Transverse colon (tissue), 4 donors: ENCODE measurements at regions of chr11 and their contacts with region 1.

Region 1: GRCh38 chr11:93529707-93530467 is 13.3 kb downstream of the SMCO4 start:
- DNase-seq: no peak
- H3K4me3 ChIP-seq: no peak overlapping the region
- H3K27ac ChIP-seq: peak overlapping the region; percentile 40 to 69 (median 57)
- H3K4me1 ChIP-seq: peaks cover 4 to 53% (median 12%) of the 10 kb centered on the region in 4 donors
- H3K27me3 ChIP-seq: no peaks in the 10 kb centered on the region
- CTCF ChIP-seq: no peak
- EP300 ChIP-seq: no peak
- POLR2A ChIP-seq: no peak

Region 2: DNA sequence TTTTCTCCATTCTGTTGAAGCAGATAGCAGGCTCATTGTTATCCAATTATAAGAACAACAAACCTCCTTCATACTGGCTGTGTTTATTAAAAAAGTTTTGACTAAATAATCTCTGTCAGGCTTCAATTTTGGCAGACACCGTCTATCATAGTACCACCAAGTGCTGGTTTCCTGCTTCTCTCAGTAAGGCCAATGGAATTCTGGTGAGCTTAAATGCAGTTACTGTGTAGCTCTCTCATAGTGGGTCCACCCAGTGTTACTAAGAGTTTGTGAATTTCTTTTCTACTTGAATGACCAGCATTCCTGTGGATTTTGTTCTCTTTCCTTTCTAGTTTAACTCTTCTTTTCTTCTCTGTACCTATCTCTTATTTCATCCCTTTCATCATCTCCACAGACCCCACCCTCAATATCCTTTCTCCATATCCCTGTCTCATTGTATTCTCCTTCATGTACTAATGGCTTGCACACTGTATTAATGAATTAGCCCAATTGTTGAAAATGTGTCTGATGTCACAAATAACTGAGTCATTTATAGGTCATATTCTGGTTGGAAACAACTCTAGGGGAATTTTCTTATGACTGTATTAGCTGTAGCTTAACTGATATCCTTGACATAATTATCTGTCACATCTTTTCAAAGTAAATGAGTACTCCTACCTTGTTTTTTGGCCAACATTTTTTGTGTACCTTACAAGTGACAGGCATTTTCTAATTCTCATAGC is 933.1 kb before region 1 on chr11:
- in situ Hi-C with region 1: no loop called
- intact Hi-C with region 1: no loop called
- DNase-seq: no peak
- H3K4me3 ChIP-seq: no peak overlapping the region
- H3K27ac ChIP-seq: no peak overlapping the region
- H3K4me1 ChIP-seq: no peaks in the 10 kb centered on the region
- H3K27me3 ChIP-seq: no peaks in the 10 kb centered on the region
- CTCF ChIP-seq: no peak
- EP300 ChIP-seq: no peak
- POLR2A ChIP-seq: no peak

Region 3: DNA sequence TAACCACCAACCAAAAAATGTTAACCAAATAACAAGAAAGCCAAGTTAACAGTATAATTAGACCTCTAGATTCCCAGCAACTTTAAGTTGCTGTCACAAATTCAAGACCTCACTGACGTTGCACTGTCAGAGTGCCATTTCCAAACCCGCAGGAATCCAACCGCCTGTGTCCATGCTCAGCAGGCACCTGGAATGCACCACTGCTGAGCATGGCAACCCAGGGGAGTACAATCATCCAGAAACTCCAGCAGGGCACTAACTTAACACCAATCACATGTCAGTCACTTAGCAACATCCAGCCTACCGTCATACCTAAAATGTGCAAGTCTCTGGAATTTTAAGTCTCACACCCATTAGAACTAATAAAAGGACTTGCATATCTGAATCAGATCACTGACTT is 35.5 kb before region 1 on chr11:
- in situ Hi-C with region 1: no loop called
- intact Hi-C with region 1: no loop called
- DNase-seq: no peak
- H3K4me3 ChIP-seq: no peak overlapping the region
- H3K27ac ChIP-seq: no peak overlapping the region
- H3K4me1 ChIP-seq: peaks cover 0 to 18% (median 10%) of the 10 kb centered on the region in 4 donors
- H3K27me3 ChIP-seq: no peaks in the 10 kb centered on the region
- CTCF ChIP-seq: no peak
- EP300 ChIP-seq: no peak
- POLR2A ChIP-seq: no peak

Region 4: GRCh38 chr11:93861808-93862207 is 331.9 kb after region 1 on chr11:
- in situ Hi-C with region 1: no loop called
- intact Hi-C with region 1: no loop called
- DNase-seq: no peak
- H3K4me3 ChIP-seq: no peak overlapping the region
- H3K27ac ChIP-seq: no peak overlapping the region
- H3K4me1 ChIP-seq: no peaks in the 10 kb centered on the region
- H3K27me3 ChIP-seq: no peaks in the 10 kb centered on the region
- CTCF ChIP-seq: no peak
- EP300 ChIP-seq: no peak
- POLR2A ChIP-seq: no peak

Region 5: DNA sequence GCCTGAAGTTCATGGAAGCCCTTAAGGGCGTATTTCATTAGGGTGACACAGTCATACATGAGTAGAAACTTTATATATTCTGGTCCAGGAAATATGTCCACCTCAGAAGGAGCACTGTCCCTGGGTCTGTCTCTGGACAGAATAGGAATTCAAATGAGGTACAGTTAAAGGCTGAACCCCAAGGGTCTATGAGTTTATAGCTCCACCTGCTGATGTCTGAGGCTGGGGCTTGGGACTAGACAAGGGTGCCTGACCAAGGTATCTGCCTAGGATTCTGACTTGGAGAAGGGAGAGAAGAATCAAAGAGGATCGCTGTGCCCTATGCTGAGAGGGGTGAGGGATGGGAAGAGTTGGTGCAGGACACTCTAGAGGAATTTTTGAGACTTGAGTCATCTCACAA is 506.2 kb after region 1 on chr11:
- in situ Hi-C with region 1: no loop called
- intact Hi-C with region 1: no loop called
- DNase-seq: no peak
- H3K4me3 ChIP-seq: no peak overlapping the region
- H3K27ac ChIP-seq: no peak overlapping the region
- H3K4me1 ChIP-seq: no peaks in the 10 kb centered on the region
- H3K27me3 ChIP-seq: no peaks in the 10 kb centered on the region
- CTCF ChIP-seq: no peak
- EP300 ChIP-seq: no peak
- POLR2A ChIP-seq: no peak

Region 6: GRCh38 chr11:95387325-95387724 is 1857.4 kb after region 1 on chr11:
- in situ Hi-C with region 1: no loop called
- intact Hi-C with region 1: loop called (anchors 5 kb)
- DNase-seq: no peak
- H3K4me3 ChIP-seq: no peak overlapping the region
- H3K27ac ChIP-seq: no peak overlapping the region
- H3K4me1 ChIP-seq: no peaks in the 10 kb centered on the region
- H3K27me3 ChIP-seq: no peaks in the 10 kb centered on the region
- CTCF ChIP-seq: no peak
- EP300 ChIP-seq: no peak
- POLR2A ChIP-seq: no peak